HEK293 (cell line): ENCODE measurements at regions of chr10 and their contacts with region 1.

Region 1: GRCh38 chr10:133520155-133520738 is 6.9 kb upstream of the CYP2E1 start:
- H3K4me3 ChIP-seq: peak overlapping the region; percentile 19
- H3K27ac ChIP-seq: no peak overlapping the region
- H3K4me1 ChIP-seq: no peaks in the 10 kb centered on the region
- CTCF ChIP-seq: peak; percentile 96

Region 2: DNA sequence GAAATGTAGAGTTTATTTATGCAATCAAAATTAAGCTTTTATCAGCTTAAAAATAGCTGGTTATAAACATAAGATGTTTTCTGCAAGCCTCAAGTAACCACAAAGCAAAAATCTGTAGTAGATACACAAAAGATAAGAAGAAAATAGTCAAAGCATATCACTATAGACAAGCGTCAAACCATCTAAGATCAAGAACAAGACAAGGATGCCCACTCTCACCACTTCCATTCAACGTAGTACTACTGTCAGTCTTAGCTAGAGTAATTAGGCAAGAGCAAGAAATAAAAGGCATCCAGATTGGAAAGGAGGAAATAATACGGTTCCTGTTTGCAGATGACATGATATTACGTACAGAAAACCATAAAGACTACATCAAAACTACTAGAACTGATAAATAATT is 10.5 kb before region 1 on chr10:
- CTCF ChIA-PET with region 1: interaction called, 12 read pairs
- POLR2A ChIA-PET with region 1: no interaction called
- H3K4me3 ChIP-seq: no peak overlapping the region
- H3K27ac ChIP-seq: no peak overlapping the region
- H3K4me1 ChIP-seq: no peaks in the 10 kb centered on the region
- CTCF ChIP-seq: no peak